Activated naive CD4-positive, alpha-beta T cell treated with anti-CD3 and anti-CD28 coated beads for 36 hours (primary cell): ENCODE measurements at regions of chr5 and their contacts with region 1.

Region 1: GRCh38 chr5:141618804-141619554 is at the start of gene DIAPH1:
- DNase-seq: peak; percentile 99
- H3K4me3 Mint-ChIP-seq: peak within 1 kb of the TSS; percentile 98
- H3K27ac Mint-ChIP-seq: peak within 1 kb of the TSS; percentile 99
- H3K4me1 Mint-ChIP-seq: peaks cover 60% of the 10 kb centered on the region
- H3K27me3 Mint-ChIP-seq: no peaks in the 10 kb centered on the region
- total RNA-seq, gene DIAPH1: 165 to 169 TPM

Region 2: DNA sequence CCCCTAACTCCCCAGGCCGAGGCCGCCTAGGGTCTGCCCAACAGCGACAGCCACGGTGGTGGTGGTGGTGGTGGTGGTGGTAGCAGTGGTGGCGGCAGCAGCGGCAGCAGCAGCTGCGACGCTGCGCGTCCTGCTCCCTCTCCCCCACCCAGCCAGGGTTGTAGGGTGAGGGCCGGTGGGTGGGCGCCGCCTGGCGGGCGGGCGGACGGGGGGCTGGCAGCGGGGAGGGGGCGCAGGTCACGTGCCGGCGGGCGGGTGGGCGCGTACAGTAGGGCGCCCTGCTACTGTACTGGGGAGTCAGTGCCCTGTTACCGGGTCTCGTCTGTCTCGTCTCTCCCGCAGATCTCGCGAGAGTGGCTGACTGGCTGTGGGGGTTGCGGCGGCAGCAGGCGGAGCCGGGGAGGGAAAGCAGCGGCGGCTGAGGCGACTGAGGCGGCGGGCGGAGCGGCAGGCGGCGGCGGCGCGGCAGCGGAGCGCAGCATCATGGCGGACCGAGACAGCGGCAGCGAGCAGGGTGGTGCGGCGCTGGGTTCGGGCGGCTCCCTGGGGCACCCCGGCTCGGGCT is 1505.2 kb before region 1 on chr5 and contains the start of gene PURA:
- CTCF ChIA-PET with region 1: no interaction called
- intact Hi-C with region 1: loop called (anchors 10 kb)
- DNase-seq: peak; percentile 98
- H3K4me3 Mint-ChIP-seq: peak within 1 kb of the TSS; percentile 91
- H3K27ac Mint-ChIP-seq: peak within 1 kb of the TSS; percentile 90
- H3K4me1 Mint-ChIP-seq: peaks cover 66% of the 10 kb centered on the region
- H3K27me3 Mint-ChIP-seq: no peaks in the 10 kb centered on the region
- total RNA-seq, gene PURA: 9.0 to 10.3 TPM

Region 3: DNA sequence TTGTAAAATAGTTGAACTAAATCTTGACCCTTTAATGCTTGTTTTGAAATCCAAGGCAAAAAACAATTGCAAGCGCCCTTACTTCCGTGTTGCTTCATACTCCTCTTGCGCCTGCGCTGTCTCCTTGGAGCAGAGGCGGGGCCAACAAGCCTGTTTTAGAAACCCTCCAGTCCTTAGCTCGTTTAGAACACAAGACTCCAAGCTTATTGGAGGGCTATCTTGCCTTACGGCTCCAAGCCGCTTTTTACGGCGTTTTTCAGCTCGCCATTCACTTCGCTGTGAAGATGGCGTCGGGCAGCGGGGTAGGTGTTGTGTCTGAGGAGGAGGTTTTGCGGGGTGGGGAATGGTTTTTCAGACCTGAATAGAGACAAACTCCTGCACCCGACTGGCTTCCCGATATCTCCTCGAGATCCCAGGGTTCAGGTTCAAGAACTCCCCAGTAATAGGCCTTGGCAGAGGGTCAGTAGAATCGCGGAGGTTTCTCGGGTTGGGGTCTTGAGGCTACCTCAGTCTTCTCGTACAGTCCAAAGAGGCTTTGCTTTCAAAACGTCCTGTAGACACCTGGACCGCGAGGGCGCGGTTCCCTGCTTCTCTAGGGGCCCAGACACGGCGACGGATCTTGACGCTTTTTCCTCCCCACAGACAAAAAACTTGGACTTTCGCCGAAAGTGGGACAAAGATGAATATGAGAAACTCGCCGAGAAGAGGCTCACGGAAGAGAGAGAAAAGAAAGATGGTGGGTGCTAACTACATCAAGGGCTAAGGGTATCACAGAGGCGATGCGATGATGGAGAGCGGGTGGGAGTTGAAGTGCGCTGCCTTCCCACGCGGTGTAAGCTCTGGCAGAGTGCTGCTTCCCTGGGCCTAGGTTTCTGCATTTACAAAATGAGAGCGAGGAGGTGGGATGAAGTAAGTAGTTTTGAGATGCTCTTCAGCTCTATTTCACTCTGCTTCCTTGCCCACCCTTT is 918.5 kb before region 1 on chr5 and contains the start of gene ZMAT2:
- CTCF ChIA-PET with region 1: no interaction called
- intact Hi-C with region 1: loop called (anchors 10 kb)
- DNase-seq: peak; percentile 97
- H3K4me3 Mint-ChIP-seq: peak within 1 kb of the TSS; percentile 97
- H3K27ac Mint-ChIP-seq: peak within 1 kb of the TSS; percentile 87
- H3K4me1 Mint-ChIP-seq: peaks cover 24% of the 10 kb centered on the region
- H3K27me3 Mint-ChIP-seq: no peaks in the 10 kb centered on the region
- total RNA-seq, gene ZMAT2: 52.9 to 58.8 TPM

Region 4: DNA sequence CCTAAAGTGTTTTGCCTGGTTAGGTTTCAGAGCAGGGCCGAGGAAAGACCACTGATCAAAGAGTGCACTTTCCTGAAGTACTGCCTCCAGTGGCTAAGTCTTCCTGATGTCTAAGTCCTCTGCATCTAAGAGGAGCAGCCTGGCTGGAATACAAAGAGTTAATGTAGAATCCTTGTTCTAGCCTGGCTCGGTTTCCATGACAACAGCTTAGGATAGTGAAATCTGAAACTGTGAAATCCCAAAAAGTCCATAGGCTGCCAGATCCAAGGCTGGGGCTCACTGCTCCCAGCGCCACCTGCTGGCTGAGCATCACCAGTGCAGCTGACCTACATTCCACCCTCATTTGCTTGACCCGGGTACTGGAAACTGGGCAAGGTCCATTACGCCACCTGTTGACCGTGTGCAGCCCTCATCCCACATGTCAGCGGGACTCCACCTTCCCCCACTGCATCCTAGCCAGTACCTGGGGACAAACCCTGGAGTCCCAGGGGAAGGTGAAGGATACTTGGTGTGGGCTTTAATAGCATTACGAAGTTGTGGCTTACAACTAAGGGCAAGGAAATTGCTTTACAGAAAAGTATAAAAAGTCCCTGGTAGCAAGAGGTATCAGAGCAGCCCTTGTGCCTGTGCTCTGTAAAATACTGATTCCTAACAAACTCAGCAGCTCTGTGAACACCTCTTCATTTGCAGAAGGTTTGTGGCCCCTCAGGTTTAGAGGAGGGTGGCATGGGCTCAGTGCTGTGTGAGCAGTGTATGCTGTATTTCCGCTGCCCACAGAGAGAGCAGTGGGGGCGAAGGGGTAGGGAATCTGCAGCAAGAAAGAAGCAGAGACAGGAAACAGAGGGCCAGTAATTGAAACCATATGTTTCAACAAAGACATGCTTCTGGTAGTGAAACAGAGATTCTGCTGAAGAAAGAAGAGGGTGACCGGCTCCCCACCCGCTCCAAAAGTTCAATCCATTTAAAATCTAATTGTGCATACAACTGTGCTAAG is 94.1 kb before region 1 on chr5:
- CTCF ChIA-PET with region 1: interaction called, 5 read pairs
- intact Hi-C with region 1: loop called (anchors 5 kb)
- DNase-seq: peak; percentile 57
- H3K4me3 Mint-ChIP-seq: no peak overlapping the region
- H3K27ac Mint-ChIP-seq: no peak overlapping the region
- H3K4me1 Mint-ChIP-seq: peaks cover 32% of the 10 kb centered on the region
- H3K27me3 Mint-ChIP-seq: no peaks in the 10 kb centered on the region

Region 5: DNA sequence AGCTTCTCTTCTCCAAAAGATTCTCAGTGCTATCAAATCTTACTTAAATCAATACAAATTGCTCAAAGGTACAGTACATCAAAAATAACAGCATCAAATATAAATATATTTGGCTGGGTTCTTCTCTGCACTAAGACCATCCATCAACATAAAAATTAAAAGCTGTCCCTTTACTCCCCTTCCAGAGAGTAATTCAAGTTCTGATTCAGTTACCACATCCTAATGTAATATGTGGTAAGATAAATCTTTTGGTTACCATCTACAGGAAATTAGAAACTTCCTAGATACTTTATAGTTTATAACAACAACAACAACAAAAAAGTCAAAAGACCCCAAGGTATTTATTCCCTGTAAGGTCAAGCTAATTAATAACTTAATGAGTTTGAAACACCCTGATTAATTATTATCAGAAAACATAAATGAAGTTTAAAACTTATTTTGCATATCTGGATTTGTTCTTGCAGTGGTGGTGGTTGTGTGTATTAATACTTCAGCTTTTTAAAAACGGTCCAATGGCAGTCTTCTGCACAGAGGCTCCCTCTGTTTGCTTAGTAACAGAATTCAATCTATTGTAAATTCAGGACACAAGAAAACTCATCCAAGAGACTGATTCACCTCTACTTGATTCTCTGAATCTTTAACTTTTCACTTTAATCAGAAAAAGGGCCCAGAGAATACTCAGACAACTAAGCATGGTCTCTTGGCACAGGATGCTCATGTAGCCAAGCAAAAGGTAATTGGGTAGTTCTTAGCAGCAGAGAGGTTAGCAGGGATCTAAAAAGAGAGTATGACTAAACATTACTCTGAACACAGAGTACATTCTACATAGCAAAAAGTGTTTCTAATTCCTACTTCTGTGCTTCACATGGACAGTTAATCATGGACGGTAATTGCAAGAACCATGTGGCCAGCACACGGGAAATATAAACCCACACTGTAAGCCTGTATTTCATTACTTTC is 20.3 kb before region 1 on chr5:
- CTCF ChIA-PET with region 1: interaction called, 197 read pairs
- intact Hi-C with region 1: no loop called
- DNase-seq: no peak
- H3K4me3 Mint-ChIP-seq: no peak overlapping the region
- H3K27ac Mint-ChIP-seq: peak overlapping the region; percentile 65
- H3K4me1 Mint-ChIP-seq: peaks cover 71% of the 10 kb centered on the region
- H3K27me3 Mint-ChIP-seq: no peaks in the 10 kb centered on the region

Region 6: DNA sequence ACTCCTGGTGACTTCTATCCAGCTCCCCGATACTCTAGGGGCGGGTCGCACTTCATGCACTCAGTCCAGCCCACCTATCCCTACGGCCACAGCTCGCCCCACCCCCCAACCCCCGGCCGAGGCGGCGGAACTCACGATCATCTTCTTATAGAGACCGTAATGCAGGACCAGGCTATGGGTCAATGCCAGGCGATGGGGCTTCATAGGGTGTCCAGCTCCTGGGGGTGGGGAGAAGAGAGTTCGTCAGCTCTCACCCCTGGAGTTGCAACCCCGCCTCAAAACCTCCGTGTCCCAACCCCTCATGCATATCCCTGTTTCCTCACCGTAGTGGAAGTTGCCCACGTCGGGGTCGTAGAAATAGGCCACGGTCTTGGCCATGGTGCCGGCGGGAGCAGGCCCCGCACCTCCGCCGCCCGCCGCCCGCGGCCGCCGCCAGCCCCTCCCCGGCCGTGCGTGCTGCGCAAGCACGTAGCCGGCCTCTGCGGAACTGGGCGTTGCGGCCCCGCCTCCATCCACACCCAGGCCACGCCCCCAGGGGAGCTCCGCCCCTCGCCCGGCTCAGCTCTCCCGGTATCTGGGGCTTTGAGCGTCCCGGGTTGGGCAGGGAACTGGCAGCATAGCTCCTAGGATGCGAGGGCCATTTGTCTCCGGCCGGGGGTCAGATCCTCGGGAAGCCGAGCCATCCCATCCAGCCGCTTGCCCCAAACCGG is 17.6 kb after region 1 on chr5 and contains the starts of genes HDAC3 and RELL2:
- CTCF ChIA-PET with region 1: interaction called, 36 read pairs
- intact Hi-C with region 1: loop called (anchors 1 kb)
- DNase-seq: peak; percentile 94
- H3K4me3 Mint-ChIP-seq: peak within 1 kb of the TSS; percentile 93
- H3K27ac Mint-ChIP-seq: peak within 1 kb of the TSS; percentile 87
- H3K4me1 Mint-ChIP-seq: peaks cover 51% of the 10 kb centered on the region
- H3K27me3 Mint-ChIP-seq: no peaks in the 10 kb centered on the region
- total RNA-seq, gene HDAC3: 52.1 to 55.6 TPM
- total RNA-seq, gene RELL2: 20.9 to 21.1 TPM